ENCODE measurements at regions of chr14 and their contacts with region 1.

Region 1: GRCh38 chr14:20855652-20856291 is 35.4 kb upstream of the RNASE3 start:
- DNase-seq: peak; percentile 87
- ATAC-seq: peak; percentile 92
- H3K4me3 ChIP-seq: no peak overlapping the region
- H3K27ac ChIP-seq: no peak overlapping the region
- H3K4me1 ChIP-seq: peaks cover 23% of the 10 kb centered on the region
- H3K27me3 ChIP-seq: peaks cover 16% of the 10 kb centered on the region
- CTCF ChIP-seq: peak; percentile 89

Region 2: GRCh38 chr14:20469242-20469889 is 386.4 kb before region 1 on chr14 and contains the start of gene PNP:
- CTCF ChIA-PET with region 1: no interaction called
- POLR2A ChIA-PET with region 1: no interaction called
- intact Hi-C with region 1: no loop called
- DNase-seq: peak; percentile 92
- ATAC-seq: peak; percentile 94
- H3K4me3 ChIP-seq: peak within 1 kb of the TSS; percentile 92
- H3K27ac ChIP-seq: peak within 1 kb of the TSS; percentile 80
- H3K4me1 ChIP-seq: peaks cover 18% of the 10 kb centered on the region
- H3K27me3 ChIP-seq: no peaks in the 10 kb centered on the region
- CTCF ChIP-seq: no peak
- total RNA-seq, gene PNP: 108 and 118 TPM in 2 replicates

Region 3: DNA sequence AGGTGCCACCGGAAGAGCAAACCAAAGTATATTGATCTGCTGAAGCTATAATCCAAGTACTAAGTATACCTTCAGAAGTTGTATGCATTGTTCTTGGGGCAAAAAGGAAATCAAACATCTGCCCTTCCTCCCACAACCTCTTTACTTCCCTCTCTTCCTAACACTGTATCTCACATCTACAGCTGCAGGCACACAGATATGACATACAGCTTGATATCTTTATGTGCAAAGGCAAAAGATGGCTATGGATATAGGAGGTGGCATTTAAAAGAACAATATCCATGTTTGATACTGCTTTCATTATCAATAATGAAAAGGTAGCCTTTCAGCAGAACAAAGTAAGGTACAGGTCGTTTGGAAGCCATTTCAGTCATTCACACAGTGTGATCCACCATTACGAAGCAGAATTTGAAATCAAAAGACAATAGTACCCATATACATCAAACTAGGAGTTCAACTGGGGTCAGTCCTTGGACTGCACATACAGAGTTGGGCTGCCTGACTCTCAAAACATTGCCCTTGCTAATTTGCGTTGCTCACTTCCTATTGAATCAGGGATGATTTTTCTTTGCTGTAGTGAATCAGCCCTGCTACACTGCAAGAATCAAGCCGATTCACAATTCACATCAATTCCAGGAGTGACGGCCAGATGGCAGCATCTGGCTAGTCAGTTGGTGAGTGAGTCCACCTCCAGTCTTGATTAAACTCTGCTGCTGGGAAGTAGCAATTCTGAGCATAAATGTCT is 158.3 kb before region 1 on chr14:
- CTCF ChIA-PET with region 1: no interaction called
- POLR2A ChIA-PET with region 1: no interaction called
- intact Hi-C with region 1: loop called (anchors 1 kb)
- DNase-seq: peak; percentile 95
- ATAC-seq: peak; percentile 98
- H3K4me3 ChIP-seq: no peak overlapping the region
- H3K27ac ChIP-seq: no peak overlapping the region
- H3K4me1 ChIP-seq: peaks cover 7% of the 10 kb centered on the region
- H3K27me3 ChIP-seq: no peaks in the 10 kb centered on the region
- CTCF ChIP-seq: peak; percentile 92

Region 4: GRCh38 chr14:20836668-20837338 is 19.0 kb before region 1 on chr14:
- CTCF ChIA-PET with region 1: interaction called, 9 read pairs
- POLR2A ChIA-PET with region 1: interaction called, 6 read pairs
- intact Hi-C with region 1: loop called (anchors 1 kb)
- DNase-seq: peak; percentile 84
- ATAC-seq: peak; percentile 85
- H3K4me3 ChIP-seq: no peak overlapping the region
- H3K27ac ChIP-seq: no peak overlapping the region
- H3K4me1 ChIP-seq: peaks cover 4% of the 10 kb centered on the region; the same call in 1 of the 2 replicates
- H3K27me3 ChIP-seq: no peaks in the 10 kb centered on the region
- CTCF ChIP-seq: peak; percentile 90

Region 5: GRCh38 chr14:20970983-20971704 is 115.4 kb after region 1 on chr14:
- CTCF ChIA-PET with region 1: interaction called, 11 read pairs
- POLR2A ChIA-PET with region 1: no interaction called
- intact Hi-C with region 1: loop called (anchors 1 kb)
- DNase-seq: peak; percentile 89
- ATAC-seq: peak; percentile 87
- H3K4me3 ChIP-seq: peak overlapping the region; percentile 77
- H3K27ac ChIP-seq: no peak overlapping the region
- H3K4me1 ChIP-seq: peaks cover 9% of the 10 kb centered on the region
- H3K27me3 ChIP-seq: peaks cover 22% of the 10 kb centered on the region; the same call in 1 of the 2 replicates
- CTCF ChIP-seq: peak; percentile 89

Region 6: DNA sequence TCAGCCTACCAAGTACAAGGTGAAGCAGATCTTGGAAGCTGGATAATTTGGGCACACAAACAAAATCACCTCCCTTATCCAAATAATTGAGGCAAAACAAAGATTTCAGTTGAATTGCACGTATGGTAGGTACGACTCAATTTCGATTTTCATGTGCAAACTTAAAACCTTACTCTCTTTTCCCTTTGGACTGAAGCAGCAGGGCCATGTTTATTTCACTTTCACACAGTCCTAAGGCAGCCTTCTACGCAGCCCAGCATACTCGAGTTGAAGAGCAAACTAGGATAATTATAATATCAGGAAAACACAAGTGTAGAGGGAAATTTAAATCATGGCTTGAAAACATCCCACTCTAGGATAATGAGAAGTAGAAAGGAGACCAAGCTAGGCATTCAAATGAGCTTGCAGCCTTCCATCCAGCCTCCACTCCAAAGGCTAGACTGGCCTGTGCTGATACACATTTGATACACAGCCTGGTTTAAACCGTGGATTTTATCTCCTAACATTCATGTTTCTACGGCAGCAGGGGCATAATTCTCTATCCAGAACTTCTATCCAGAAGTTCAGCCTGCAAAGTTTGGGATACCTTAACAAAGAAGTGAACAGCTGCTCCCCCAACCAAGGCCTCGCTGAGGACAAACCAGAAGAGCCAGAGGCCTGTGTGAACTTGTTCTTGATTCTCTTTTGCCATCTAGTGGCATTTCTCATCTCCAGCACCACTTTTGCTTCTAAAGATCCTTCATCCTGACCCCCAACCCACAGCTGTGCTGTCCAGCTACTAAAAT is 184.0 kb after region 1 on chr14:
- CTCF ChIA-PET with region 1: no interaction called
- POLR2A ChIA-PET with region 1: no interaction called
- intact Hi-C with region 1: loop called (anchors 5 kb)
- DNase-seq: peak; percentile 62
- ATAC-seq: peak; percentile 83
- H3K4me3 ChIP-seq: no peak overlapping the region
- H3K27ac ChIP-seq: no peak overlapping the region
- H3K4me1 ChIP-seq: no peaks in the 10 kb centered on the region
- H3K27me3 ChIP-seq: peaks cover 39% of the 10 kb centered on the region
- CTCF ChIP-seq: peak; percentile 67

Region 7: GRCh38 chr14:21229821-21230220 is 374.0 kb after region 1 on chr14:
- CTCF ChIA-PET with region 1: no interaction called
- POLR2A ChIA-PET with region 1: no interaction called
- intact Hi-C with region 1: no loop called
- DNase-seq: no peak
- ATAC-seq: no peak
- H3K4me3 ChIP-seq: no peak overlapping the region
- H3K27ac ChIP-seq: no peak overlapping the region
- H3K4me1 ChIP-seq: no peaks in the 10 kb centered on the region
- H3K27me3 ChIP-seq: no peaks in the 10 kb centered on the region
- CTCF ChIP-seq: no peak

Measured in PC-3 (cell line).